ENCODE measurements at regions of chr11 and their contacts with region 1.

Region 1: DNA sequence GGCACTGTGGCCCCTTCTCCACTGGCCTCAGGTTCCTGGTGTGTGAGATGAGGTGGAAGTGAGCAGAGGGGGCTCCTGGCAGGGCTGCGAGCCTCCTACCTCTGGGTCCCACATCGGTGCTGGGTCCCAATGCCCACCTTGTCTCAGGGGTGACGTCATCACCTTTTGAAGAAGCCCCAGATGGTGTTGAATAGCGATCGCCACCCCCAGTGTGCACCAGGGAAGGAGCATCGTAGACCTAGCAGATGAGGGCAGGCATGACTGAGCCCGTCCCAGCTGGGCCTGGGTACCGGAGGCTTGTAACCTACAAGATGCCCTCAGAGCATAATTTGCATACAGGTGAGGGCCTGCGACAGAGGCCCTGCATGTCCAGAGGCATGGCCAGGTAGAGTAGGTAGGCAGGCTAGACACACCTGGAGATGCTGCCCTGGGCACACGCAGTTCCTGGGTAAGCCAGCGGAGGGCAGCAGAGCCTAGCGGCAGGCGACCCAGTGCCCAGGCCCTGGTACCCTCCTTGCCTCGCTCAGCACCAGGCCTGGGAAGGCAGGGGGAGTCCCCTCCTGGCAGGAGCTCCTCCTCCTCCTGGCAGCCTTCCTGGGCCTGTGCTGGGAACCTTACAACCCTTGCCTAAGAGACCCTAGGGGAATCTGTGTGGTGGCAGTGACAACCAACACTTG is 52.5 kb downstream of the TPCN2 start:
- DNase-seq: peak; percentile 89
- ATAC-seq: peak; percentile 91 to 94
- H3K4me3 ChIP-seq: no peak overlapping the region
- H3K27ac ChIP-seq: no peak overlapping the region
- H3K4me1 ChIP-seq: peaks cover 17% of the 10 kb centered on the region
- H3K27me3 ChIP-seq: no peaks in the 10 kb centered on the region
- CTCF ChIP-seq: peak; percentile 100

Region 2: GRCh38 chr11:69654569-69655327 is 553.5 kb after region 1 on chr11:
- intact Hi-C with region 1: loop called (anchors 10 kb)
- DNase-seq: no peak
- ATAC-seq: peak; percentile 13 to 76
- H3K4me3 ChIP-seq: no peak overlapping the region
- H3K27ac ChIP-seq: no peak overlapping the region
- H3K4me1 ChIP-seq: peaks cover 6% of the 10 kb centered on the region
- H3K27me3 ChIP-seq: no peaks in the 10 kb centered on the region
- CTCF ChIP-seq: no peak